ENCODE measurements at regions of chr1 and their contacts with region 1.

Region 1: DNA sequence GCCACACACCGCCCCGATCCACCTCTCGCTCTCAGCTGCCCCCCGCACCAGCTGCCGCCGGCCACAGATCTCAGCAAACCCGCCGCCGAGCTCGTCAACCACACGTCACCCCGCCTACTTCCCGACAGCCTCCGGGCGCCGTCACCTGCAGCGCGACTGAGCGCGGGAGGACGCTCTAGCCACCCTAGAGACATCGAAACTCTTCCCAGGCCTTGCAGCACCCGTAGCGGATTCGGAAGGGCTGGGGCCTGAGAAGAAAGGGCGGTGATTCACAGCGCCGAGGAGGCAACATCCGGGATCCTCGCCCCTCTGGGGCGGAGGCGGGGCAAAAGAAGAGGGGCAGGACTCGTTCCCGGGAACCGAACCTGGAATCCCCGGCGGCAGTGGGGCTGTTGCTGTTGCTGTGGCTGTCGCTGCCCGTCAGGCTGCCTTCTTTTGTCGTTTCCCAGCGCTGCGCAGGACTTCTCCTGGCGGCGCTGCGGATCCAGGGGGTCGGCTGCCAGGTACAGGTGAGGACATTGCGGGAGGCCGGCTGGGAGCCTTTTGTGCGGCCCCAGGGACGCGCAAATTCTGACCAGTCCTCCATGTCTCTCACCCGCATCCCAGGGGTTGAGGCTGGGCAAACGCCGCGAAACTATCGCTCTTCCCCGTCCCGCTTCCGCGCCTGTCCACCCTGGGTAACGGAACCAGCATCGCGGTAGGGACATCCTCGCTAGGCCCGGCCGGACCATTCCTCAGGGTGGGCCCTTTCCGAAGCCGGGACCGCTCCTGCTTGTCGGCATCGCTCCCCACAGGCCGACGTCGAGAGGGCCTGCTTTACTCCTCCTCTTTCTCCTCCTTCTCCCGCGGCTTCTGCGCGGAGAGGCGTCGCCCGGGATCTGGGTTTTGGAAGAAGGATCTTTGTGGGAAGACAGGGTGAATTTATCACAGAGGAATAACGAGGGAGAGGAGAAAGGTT is at the starts of genes RO60 and UCHL5:
- DNase-seq: peak; percentile 96
- H3K4me3 ChIP-seq: peak within 1 kb of the TSS; percentile 78
- H3K27ac ChIP-seq: peak within 1 kb of the TSS; percentile 92
- H3K4me1 ChIP-seq: peaks cover 23% of the 10 kb centered on the region
- H3K27me3 ChIP-seq: no peaks in the 10 kb centered on the region
- CTCF ChIP-seq: no peak
- total RNA-seq, gene RO60: 40.4 and 49.2 TPM in 2 replicates
- total RNA-seq, gene UCHL5: 37.0 and 49.3 TPM in 2 replicates

Region 2: GRCh38 chr1:192445848-192446489 is 613.6 kb before region 1 on chr1:
- CTCF ChIA-PET with region 1: no interaction called
- POLR2A ChIA-PET with region 1: no interaction called
- intact Hi-C with region 1: no loop called
- DNase-seq: peak in 1 of 2 experiments; percentile 20
- H3K4me3 ChIP-seq: no peak overlapping the region
- H3K27ac ChIP-seq: no peak overlapping the region
- H3K4me1 ChIP-seq: no peaks in the 10 kb centered on the region
- H3K27me3 ChIP-seq: no peaks in the 10 kb centered on the region
- CTCF ChIP-seq: peak; percentile 93

Region 3: GRCh38 chr1:192831706-192832355 is 227.7 kb before region 1 on chr1:
- CTCF ChIA-PET with region 1: no interaction called
- POLR2A ChIA-PET with region 1: no interaction called
- intact Hi-C with region 1: no loop called
- DNase-seq: no peak
- H3K4me3 ChIP-seq: no peak overlapping the region
- H3K27ac ChIP-seq: no peak overlapping the region
- H3K4me1 ChIP-seq: no peaks in the 10 kb centered on the region; the same call in 1 of the 2 replicates
- H3K27me3 ChIP-seq: no peaks in the 10 kb centered on the region
- CTCF ChIP-seq: no peak

Region 4: GRCh38 chr1:193087893-193088292 is 28.3 kb after region 1 on chr1:
- CTCF ChIA-PET with region 1: no interaction called
- POLR2A ChIA-PET with region 1: no interaction called
- intact Hi-C with region 1: loop called (anchors 1 kb)
- DNase-seq: no peak
- H3K4me3 ChIP-seq: no peak overlapping the region
- H3K27ac ChIP-seq: no peak overlapping the region
- H3K4me1 ChIP-seq: no peaks in the 10 kb centered on the region
- H3K27me3 ChIP-seq: no peaks in the 10 kb centered on the region
- CTCF ChIP-seq: no peak

Region 5: GRCh38 chr1:193104906-193105820 is 45.6 kb after region 1 on chr1 and contains the start of gene GLRX2:
- CTCF ChIA-PET with region 1: no interaction called
- POLR2A ChIA-PET with region 1: interaction called, 5 read pairs
- intact Hi-C with region 1: loop called (anchors 1 kb)
- DNase-seq: peak; percentile 70 to 85
- H3K4me3 ChIP-seq: peak within 1 kb of the TSS; percentile 59
- H3K27ac ChIP-seq: peak within 1 kb of the TSS; percentile 76
- H3K4me1 ChIP-seq: peaks cover 16% of the 10 kb centered on the region
- H3K27me3 ChIP-seq: no peaks in the 10 kb centered on the region
- CTCF ChIP-seq: no peak
- total RNA-seq, gene GLRX2: 12.5 and 16.7 TPM in 2 replicates